HCT116 (cell line): ENCODE measurements at regions of chr1 and their contacts with region 1.

Region 1: DNA sequence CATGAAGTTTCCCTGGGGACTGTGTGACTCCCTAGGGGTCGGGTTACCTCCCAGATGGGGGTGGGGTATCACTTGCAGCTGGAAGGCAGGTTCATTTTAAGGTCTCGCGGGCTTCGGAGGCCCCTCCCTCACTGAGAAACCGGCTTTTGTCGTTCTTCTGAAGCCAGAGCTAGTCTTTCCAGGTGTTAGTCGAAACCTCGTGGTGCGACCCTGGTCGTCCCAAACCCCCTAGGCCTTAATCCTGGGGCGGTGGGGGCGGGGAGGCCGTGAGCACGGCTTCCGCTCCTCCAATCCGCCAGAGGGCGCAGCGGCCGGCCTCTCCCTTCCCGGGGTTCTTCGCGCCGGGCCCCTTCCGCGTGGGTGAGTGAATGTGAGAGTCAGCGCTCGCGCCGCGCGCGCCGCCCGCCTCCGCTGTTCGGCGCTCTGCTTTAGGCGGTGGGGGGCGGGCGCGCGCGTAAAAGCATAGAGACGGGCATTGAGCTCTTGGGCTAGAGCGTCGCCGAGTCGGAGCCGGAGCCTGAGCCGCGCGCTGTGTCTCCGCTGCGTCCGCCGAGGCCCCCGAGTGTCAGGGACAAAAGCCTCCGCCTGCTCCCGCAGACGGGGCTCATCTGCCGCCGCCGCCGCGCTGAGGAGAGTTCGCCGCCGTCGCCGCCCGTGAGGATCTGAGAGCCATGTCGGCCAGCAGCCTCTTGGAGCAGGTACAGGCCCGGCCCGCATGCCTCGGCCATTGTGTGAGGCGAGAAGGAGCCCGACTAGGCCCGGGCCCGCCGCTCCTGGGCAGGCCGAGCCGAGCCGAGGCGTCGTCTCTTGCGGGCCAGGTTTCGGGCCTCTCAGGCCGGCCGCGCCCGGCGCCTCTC is at the start of gene YTHDF2:
- DNase-seq: peak; percentile 89
- ATAC-seq: peak; percentile 94
- H3K4me3 ChIP-seq: peak within 1 kb of the TSS; percentile 91 to 92
- H3K27ac ChIP-seq: peak within 1 kb of the TSS; percentile 97
- H3K4me1 ChIP-seq: peaks cover 11 to 20% of the 10 kb centered on the region in 2 experiments
- H3K27me3 ChIP-seq: no peaks in the 10 kb centered on the region
- CTCF ChIP-seq: peak; percentile 76 to 94 (median 85)
- POLR2A ChIP-seq: peak; percentile 29
- RAD21 ChIP-seq: peak; percentile 42
- total RNA-seq, gene YTHDF2: 90.6 TPM

Region 2: GRCh38 chr1:28505406-28506187 is 231.1 kb before region 1 on chr1 and contains the start of gene RCC1:
- CTCF ChIA-PET with region 1: no interaction called
- POLR2A ChIA-PET with region 1: no interaction called
- RAD21 ChIA-PET with region 1: no interaction called
- intact Hi-C with region 1: loop called (anchors 5 kb)
- DNase-seq: peak; percentile 97
- ATAC-seq: peak; percentile 62
- H3K4me3 ChIP-seq: peak within 1 kb of the TSS; percentile 82 to 94
- H3K27ac ChIP-seq: peak within 1 kb of the TSS; percentile 97
- H3K4me1 ChIP-seq: peaks cover 29 to 72% of the 10 kb centered on the region in 2 experiments
- H3K27me3 ChIP-seq: no peaks in the 10 kb centered on the region
- CTCF ChIP-seq: no peak
- POLR2A ChIP-seq: peak; percentile 99
- RAD21 ChIP-seq: no peak
- total RNA-seq, gene RCC1: 124 TPM

Region 3: DNA sequence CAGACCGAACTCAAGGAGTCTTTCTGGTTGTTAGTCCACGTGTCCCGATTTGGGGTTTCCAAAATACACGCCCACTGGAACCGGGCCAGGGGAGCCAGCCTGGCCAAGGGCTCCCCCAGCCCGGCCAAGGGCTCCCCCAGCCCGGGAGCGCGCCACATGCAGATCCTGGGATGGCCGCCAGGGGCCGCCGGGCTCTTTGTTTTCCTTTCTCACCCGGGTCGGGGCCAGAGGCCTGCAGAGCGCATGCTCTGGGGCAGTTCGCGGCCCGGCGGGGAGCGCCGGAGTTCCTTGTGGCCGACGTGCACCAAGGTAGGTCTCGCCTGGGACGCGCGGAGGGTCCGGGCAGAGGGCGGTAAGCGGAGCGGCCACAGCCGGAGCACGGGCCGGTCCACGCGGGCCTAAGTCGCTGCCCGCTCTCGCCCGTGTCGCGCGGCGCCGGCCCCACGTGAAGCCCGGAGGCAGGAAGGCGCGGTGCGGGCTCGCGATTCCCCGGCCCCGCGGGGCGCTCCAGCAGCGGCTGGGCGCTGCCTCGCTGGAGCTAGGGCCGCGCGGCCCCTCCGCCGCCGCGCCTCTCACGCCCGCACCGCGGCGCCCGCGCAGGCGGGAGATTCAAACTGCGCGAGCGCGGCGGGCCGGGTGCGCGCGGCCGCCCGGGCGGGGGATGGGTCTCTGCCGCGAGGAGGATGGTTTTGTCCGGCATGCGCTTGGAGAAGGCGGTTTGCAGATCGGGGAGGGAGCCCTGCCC is 218.5 kb before region 1 on chr1:
- CTCF ChIA-PET with region 1: no interaction called
- POLR2A ChIA-PET with region 1: no interaction called
- RAD21 ChIA-PET with region 1: no interaction called
- intact Hi-C with region 1: no loop called
- DNase-seq: no peak
- ATAC-seq: peak; percentile 75
- H3K4me3 ChIP-seq: peak overlapping the region; percentile 69 to 90
- H3K27ac ChIP-seq: peak overlapping the region; percentile 99
- H3K4me1 ChIP-seq: peaks cover 13 to 60% of the 10 kb centered on the region in 2 experiments; a peak in 3 of 4 replicates
- H3K27me3 ChIP-seq: no peaks in the 10 kb centered on the region
- CTCF ChIP-seq: peak in 2 of 3 experiments; percentile 91 to 97; a peak in 4 of 6 replicates
- POLR2A ChIP-seq: peak; percentile 45
- RAD21 ChIP-seq: no peak

Region 4: GRCh38 chr1:28642847-28643635 is 93.6 kb before region 1 on chr1 and contains the start of gene TAF12:
- CTCF ChIA-PET with region 1: interaction called, 4 read pairs
- POLR2A ChIA-PET with region 1: interaction called, 27 read pairs
- RAD21 ChIA-PET with region 1: interaction called, 3 to 7 read pairs
- intact Hi-C with region 1: loop called (anchors 1 kb)
- DNase-seq: peak; percentile 89
- ATAC-seq: peak; percentile 86
- H3K4me3 ChIP-seq: peak within 1 kb of the TSS; percentile 70 to 95
- H3K27ac ChIP-seq: peak within 1 kb of the TSS; percentile 97
- H3K4me1 ChIP-seq: peaks cover 21 to 43% of the 10 kb centered on the region in 2 experiments; a peak in 3 of 4 replicates
- H3K27me3 ChIP-seq: no peaks in the 10 kb centered on the region
- CTCF ChIP-seq: peak in 1 of 3 experiments; percentile 27; a peak in 1 of 6 replicates
- POLR2A ChIP-seq: peak; percentile 98
- RAD21 ChIP-seq: no peak
- total RNA-seq, gene TAF12: 39.0 TPM

Region 5: GRCh38 chr1:28668191-28668955 is 68.3 kb before region 1 on chr1 and contains the start of gene GMEB1:
- CTCF ChIA-PET with region 1: interaction called, 6 read pairs
- POLR2A ChIA-PET with region 1: interaction called, 13 read pairs
- RAD21 ChIA-PET with region 1: no interaction called
- intact Hi-C with region 1: no loop called
- DNase-seq: peak; percentile 56
- ATAC-seq: peak; percentile 83
- H3K4me3 ChIP-seq: peak within 1 kb of the TSS; percentile 81 to 91
- H3K27ac ChIP-seq: peak within 1 kb of the TSS; percentile 100
- H3K4me1 ChIP-seq: peaks cover 10 to 16% of the 10 kb centered on the region in 2 experiments
- H3K27me3 ChIP-seq: no peaks in the 10 kb centered on the region
- CTCF ChIP-seq: no peak
- POLR2A ChIP-seq: no peak
- RAD21 ChIP-seq: no peak
- total RNA-seq, gene GMEB1: 19.8 TPM

Region 6: DNA sequence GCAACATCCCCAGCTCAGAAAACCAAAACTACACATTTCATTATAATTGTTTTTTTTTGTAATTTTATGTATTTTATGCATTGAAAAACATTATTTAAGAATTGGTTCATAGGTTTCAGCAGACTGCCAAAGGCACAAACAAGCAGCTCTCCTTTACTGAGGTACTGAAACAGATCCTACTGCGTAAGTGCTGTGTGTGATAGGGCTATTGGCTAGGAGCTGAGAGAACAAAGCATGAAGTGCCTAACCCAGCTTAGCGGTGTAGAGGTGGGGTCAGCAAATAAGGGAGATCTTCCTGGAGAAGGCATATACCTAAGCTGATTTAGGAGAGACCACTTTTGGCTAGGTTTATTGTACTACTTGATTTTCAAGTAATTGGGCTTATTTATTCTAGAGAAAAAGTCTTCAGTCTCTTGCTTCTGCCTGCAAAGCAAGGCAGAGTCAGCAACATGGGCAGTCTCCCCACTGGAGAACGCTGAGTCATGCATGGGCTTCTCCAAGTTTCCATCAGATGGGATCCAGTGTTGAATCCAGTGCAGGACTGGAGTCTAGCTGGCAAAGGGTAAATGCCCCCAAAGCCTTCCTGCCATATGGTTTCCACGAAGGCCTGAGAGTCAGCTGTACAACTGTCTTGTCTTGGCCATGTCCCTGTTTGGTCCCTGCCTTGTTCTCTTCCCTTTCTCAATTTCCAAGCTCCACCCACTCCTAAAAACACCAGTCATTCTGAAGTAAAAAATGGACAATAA is 17.9 kb before region 1 on chr1:
- CTCF ChIA-PET with region 1: interaction called, 15 read pairs
- POLR2A ChIA-PET with region 1: interaction called, 10 read pairs
- RAD21 ChIA-PET with region 1: no interaction called
- intact Hi-C with region 1: no loop called
- DNase-seq: no peak
- ATAC-seq: no peak
- H3K4me3 ChIP-seq: no peak overlapping the region
- H3K27ac ChIP-seq: peak overlapping the region; percentile 20; the same call in 1 of the 2 replicates
- H3K4me1 ChIP-seq: peaks cover 13 to 30% of the 10 kb centered on the region in 2 experiments
- H3K27me3 ChIP-seq: no peaks in the 10 kb centered on the region
- CTCF ChIP-seq: no peak
- POLR2A ChIP-seq: no peak
- RAD21 ChIP-seq: no peak